Mammary epithelial cell (primary cell): ENCODE measurements at regions of chr7 and their contacts with region 1.

Region 1: GRCh38 chr7:55415173-55415778 is 50.1 kb downstream of the LANCL2 start:
- DNase-seq: peak; percentile 57
- H3K4me3 ChIP-seq: no peak overlapping the region
- H3K27ac ChIP-seq: no peak overlapping the region
- H3K4me1 ChIP-seq: no peaks in the 10 kb centered on the region
- H3K27me3 ChIP-seq: no peaks in the 10 kb centered on the region
- CTCF ChIP-seq: peak; percentile 63 to 79

Region 2: GRCh38 chr7:54758702-54759592 is 656.3 kb before region 1 on chr7 and contains the start of gene SEC61G:
- CTCF ChIA-PET with region 1: no interaction called
- dilution Hi-C with region 1: no loop called
- in situ Hi-C with region 1: loop called in 1 of 2 experiments (anchors 25 kb)
- intact Hi-C with region 1: no loop called
- DNase-seq: peak; percentile 95
- H3K4me3 ChIP-seq: peak within 1 kb of the TSS; percentile 71 to 95 (median 90)
- H3K27ac ChIP-seq: peak within 1 kb of the TSS; percentile 96
- H3K4me1 ChIP-seq: peaks cover 11% of the 10 kb centered on the region
- H3K27me3 ChIP-seq: no peaks in the 10 kb centered on the region
- CTCF ChIP-seq: no peak
- total RNA-seq, gene SEC61G: 156 to 174 TPM

Region 3: DNA sequence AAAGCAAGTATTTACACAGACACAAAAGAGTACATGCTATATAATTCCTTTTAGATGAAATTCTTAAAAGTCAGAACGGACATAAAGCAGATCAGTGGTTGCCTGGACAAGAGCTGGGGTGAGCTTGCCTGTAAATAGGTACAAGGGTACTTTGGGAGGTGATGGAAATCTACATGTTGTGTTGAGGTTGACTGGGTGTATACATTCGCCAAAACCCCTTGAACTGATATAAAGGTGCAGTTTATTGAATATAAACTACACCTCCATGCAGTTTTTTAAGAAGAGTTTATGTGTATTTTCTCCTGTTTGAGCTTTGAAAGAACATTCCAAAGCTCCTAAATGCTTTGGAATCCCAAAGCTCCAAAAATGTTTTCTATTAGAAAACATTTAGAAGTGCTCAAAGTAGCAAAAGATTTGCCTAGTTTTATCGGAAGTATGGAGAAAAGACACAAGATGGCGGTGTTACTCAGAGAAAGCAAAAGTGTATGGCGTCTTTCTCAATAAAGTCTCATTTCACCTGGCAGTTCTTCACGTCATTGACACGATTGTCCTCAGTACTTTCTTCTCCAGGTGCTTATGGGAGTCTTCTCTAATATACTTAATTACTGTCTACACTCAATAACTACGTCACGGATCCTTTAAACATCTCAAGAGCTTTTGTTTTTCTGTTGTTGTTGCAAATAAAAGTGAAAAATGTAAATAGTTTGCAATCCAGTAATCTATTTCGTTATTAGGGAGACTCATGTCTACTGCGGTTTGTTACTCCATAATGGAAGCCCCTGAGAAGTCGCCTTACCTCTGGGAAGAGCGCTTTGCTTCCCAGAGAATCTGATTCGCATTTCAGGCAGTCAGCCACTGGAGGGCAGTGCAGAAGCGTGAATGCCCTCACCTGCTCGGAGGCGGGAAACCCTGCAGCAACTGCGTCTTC is 641.5 kb before region 1 on chr7:
- CTCF ChIA-PET with region 1: no interaction called
- dilution Hi-C with region 1: no loop called
- in situ Hi-C with region 1: loop called (anchors 10 to 25 kb)
- intact Hi-C with region 1: loop called (anchors 1 kb)
- DNase-seq: peak; percentile 78
- H3K4me3 ChIP-seq: peak overlapping the region; percentile 9 to 33 (median 14)
- H3K27ac ChIP-seq: peak overlapping the region; percentile 50
- H3K4me1 ChIP-seq: peaks cover 16% of the 10 kb centered on the region
- H3K27me3 ChIP-seq: no peaks in the 10 kb centered on the region
- CTCF ChIP-seq: peak; percentile 90 to 94

Region 4: GRCh38 chr7:55288070-55288824 is 127.0 kb before region 1 on chr7:
- CTCF ChIA-PET with region 1: interaction called, 4 read pairs
- dilution Hi-C with region 1: no loop called
- in situ Hi-C with region 1: loop called (anchors 5 kb)
- intact Hi-C with region 1: loop called (anchors 2 kb)
- DNase-seq: no peak
- H3K4me3 ChIP-seq: no peak overlapping the region
- H3K27ac ChIP-seq: no peak overlapping the region
- H3K4me1 ChIP-seq: no peaks in the 10 kb centered on the region
- H3K27me3 ChIP-seq: peaks cover 12% of the 10 kb centered on the region
- CTCF ChIP-seq: peak in 1 of 2 donors; percentile 18

Region 5: GRCh38 chr7:55365675-55366460 is 49.4 kb before region 1 on chr7:
- CTCF ChIA-PET with region 1: no interaction called
- dilution Hi-C with region 1: no loop called
- in situ Hi-C with region 1: no loop called
- intact Hi-C with region 1: loop called (anchors 1 kb)
- DNase-seq: peak; percentile 96
- H3K4me3 ChIP-seq: peak overlapping the region; percentile 65 to 97 (median 77)
- H3K27ac ChIP-seq: peak overlapping the region; percentile 94
- H3K4me1 ChIP-seq: peaks cover 17% of the 10 kb centered on the region
- H3K27me3 ChIP-seq: no peaks in the 10 kb centered on the region
- CTCF ChIP-seq: peak in 1 of 2 donors; percentile 44

Region 6: GRCh38 chr7:55515569-55516279 is 100.4 kb after region 1 on chr7:
- CTCF ChIA-PET with region 1: no interaction called
- dilution Hi-C with region 1: no loop called
- in situ Hi-C with region 1: no loop called
- intact Hi-C with region 1: no loop called
- DNase-seq: no peak
- H3K4me3 ChIP-seq: no peak overlapping the region
- H3K27ac ChIP-seq: no peak overlapping the region
- H3K4me1 ChIP-seq: no peaks in the 10 kb centered on the region
- H3K27me3 ChIP-seq: no peaks in the 10 kb centered on the region
- CTCF ChIP-seq: no peak

Region 7: GRCh38 chr7:56019501-56019900 is 604.2 kb after region 1 on chr7:
- CTCF ChIA-PET with region 1: no interaction called
- dilution Hi-C with region 1: no loop called
- in situ Hi-C with region 1: no loop called
- intact Hi-C with region 1: no loop called
- DNase-seq: no peak
- H3K4me3 ChIP-seq: no peak overlapping the region
- H3K27ac ChIP-seq: no peak overlapping the region
- H3K4me1 ChIP-seq: peaks cover 3% of the 10 kb centered on the region
- H3K27me3 ChIP-seq: no peaks in the 10 kb centered on the region
- CTCF ChIP-seq: no peak